ENCODE measurements at regions of chr15 and their contacts with region 1.

Region 1: DNA sequence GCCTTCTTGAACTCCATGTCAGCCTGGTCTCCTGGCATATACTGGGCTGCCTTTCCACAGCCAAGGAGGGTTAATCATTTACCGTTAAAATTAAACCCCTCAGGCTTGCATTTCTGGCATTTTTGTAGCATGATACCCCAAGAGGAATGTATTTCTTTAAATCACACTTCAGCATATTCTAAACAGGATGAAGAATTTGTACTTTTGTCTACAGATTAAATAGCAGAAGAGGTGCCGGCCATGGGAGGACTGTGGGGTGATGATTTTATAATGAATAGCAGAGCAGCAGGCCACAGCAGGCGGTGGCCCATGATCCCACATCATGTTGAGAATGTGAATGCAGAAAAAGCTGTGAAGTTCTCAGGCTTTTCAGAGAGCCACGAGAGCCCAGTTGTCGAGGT is 90.2 kb downstream of the ARNT2 start:
- DNase-seq: no peak
- H3K4me3 ChIP-seq: no peak overlapping the region
- CTCF ChIP-seq: no peak

Region 2: DNA sequence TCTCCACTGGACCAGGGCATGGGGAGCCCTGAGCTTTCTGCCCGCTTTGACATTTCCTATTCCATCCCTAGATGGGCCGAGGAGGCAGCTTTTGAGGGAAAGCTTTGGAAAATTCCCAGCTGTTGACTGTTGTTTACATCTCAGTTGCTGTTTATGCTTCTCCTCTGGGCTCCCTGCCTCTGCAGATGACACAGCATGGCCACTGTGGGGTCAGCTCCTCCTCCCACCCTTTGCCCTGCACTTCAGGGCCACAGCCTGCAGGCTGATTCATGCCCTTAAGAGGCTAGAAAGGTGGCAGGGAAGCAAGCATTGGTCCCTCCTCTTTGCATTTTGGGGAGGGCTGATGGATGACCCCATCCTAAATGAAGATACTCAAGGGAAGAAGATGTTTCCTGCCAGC is 233.8 kb before region 1 on chr15:
- CTCF ChIA-PET with region 1: no interaction called
- POLR2A ChIA-PET with region 1: no interaction called
- DNase-seq: no peak
- H3K4me3 ChIP-seq: no peak overlapping the region
- CTCF ChIP-seq: no peak

Region 3: GRCh38 chr15:80480909-80481308 is 13.4 kb before region 1 on chr15:
- CTCF ChIA-PET with region 1: interaction called, 9 read pairs
- POLR2A ChIA-PET with region 1: interaction called, 26 read pairs
- DNase-seq: peak; percentile 93
- H3K4me3 ChIP-seq: peak overlapping the region; percentile 31
- CTCF ChIP-seq: no peak

Region 4: GRCh38 chr15:80512726-80513660 is 18.6 kb after region 1 on chr15:
- CTCF ChIA-PET with region 1: interaction called, 13 read pairs
- POLR2A ChIA-PET with region 1: interaction called, 9 read pairs
- DNase-seq: no peak
- H3K4me3 ChIP-seq: no peak overlapping the region
- CTCF ChIP-seq: no peak

Measured in AG04449 (cell line).